Gastrocnemius medialis (tissue), 4 donors: ENCODE measurements at regions of chr18 and their contacts with region 1.

Region 1: DNA sequence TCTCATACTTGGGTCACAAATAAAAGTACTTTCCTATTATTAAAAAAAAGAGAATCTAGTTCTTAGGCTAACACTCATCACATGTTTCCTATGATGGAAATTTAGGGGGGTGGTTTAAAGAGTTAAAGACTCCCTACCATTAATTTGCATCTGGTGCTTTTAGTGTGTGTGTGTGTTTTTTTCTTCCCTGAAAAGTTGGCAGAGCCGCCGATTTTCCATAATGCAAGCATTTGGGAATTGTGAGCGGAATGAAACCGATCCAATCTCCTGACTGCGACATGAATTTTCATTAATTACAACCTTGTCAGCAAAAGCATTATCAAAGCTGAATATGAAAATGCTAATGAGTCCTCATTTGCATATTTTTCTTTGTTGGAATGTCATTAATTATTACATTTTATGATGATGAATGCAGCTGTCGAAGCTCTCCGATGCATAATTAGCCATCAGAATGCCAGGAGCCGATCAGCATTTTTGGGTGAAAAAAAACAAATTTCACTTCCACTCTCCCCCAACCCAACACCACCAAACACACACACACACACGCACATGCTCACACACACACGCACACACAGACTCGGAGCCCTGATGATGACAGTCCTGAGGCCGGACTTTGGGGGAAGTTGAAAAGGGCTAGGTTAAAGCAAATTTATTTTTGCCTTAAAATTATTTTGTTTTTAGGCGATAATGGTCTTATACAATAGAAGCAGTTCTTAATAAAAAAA is 165.4 kb downstream of the TCF4 start:
- DNase-seq: peak; percentile 18 to 45
- ATAC-seq: peak; percentile 40 to 52
- H3K4me3 ChIP-seq: peak overlapping the region; percentile 50 to 52 (median 52)
- H3K27ac ChIP-seq: peak overlapping the region; percentile 73 to 92 (median 89)
- H3K4me1 ChIP-seq: peaks cover 23 to 25% of the 10 kb centered on the region in 2 donors
- H3K27me3 ChIP-seq: no peaks in the 10 kb centered on the region
- CTCF ChIP-seq: no peak
- POLR2A ChIP-seq: peak in 1 of 2 donors; percentile 35

Region 2: GRCh38 chr18:55322178-55322735 is 100.4 kb before region 1 on chr18:
- in situ Hi-C with region 1: loop called in 2 of 4 experiments (anchors 5 to 25 kb)
- intact Hi-C with region 1: loop called (anchors 1 kb)
- DNase-seq: peak; percentile 77 to 90
- ATAC-seq: peak; percentile 88 to 90
- H3K4me3 ChIP-seq: peak overlapping the region; percentile 57 to 82 (median 73)
- H3K27ac ChIP-seq: peak overlapping the region; percentile 93 to 95 (median 94)
- H3K4me1 ChIP-seq: peaks cover 53 to 54% of the 10 kb centered on the region in 2 donors
- H3K27me3 ChIP-seq: no peaks in the 10 kb centered on the region
- CTCF ChIP-seq: peak in 2 of 5 experiments; percentile 12 to 17
- POLR2A ChIP-seq: peak; percentile 68 to 84

Region 3: DNA sequence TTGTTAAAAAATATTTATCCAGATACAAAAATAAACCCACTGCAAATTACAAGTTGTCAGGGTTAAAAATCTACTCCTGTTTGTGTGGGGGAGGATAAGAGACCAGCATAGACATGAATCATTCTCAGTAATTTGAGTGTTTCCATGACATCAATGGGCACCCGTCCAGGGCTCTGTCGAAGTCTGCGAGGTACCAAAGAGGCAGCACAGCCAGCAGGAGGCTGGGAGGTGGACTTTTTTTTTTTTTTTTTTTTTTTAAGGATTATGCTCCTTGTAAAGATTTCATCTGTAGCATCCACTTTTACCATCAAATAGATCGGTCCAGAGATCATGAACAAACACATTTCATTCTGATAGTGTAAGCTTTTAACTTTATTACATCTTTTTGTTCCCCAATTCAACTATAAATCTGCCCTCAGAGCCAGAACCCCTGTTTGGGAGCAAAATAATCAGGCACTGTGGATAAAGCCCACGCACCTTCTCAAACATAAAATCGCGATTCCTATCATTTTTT is 16.7 kb before region 1 on chr18:
- in situ Hi-C with region 1: no loop called
- intact Hi-C with region 1: loop called (anchors 2 kb)
- DNase-seq: peak; percentile 81 to 92
- ATAC-seq: peak; percentile 88 to 93
- H3K4me3 ChIP-seq: peak overlapping the region; percentile 50 to 58 (median 54)
- H3K27ac ChIP-seq: peak overlapping the region; percentile 80 to 85 (median 81)
- H3K4me1 ChIP-seq: peaks cover 47 to 84% of the 10 kb centered on the region in 2 donors
- H3K27me3 ChIP-seq: no peaks in the 10 kb centered on the region
- CTCF ChIP-seq: peak in 2 of 5 experiments; percentile 23 to 30
- POLR2A ChIP-seq: no peak

Region 4: GRCh38 chr18:55477499-55477859 is 54.9 kb after region 1 on chr18:
- in situ Hi-C with region 1: no loop called
- intact Hi-C with region 1: loop called (anchors 2 kb)
- DNase-seq: peak in 1 of 2 donors; percentile 48
- ATAC-seq: peak; percentile 70 to 90
- H3K4me3 ChIP-seq: peak overlapping the region; percentile 53 to 72 (median 58)
- H3K27ac ChIP-seq: peak overlapping the region; percentile 75 to 82 (median 78)
- H3K4me1 ChIP-seq: peaks cover 7 to 37% of the 10 kb centered on the region in 2 donors
- H3K27me3 ChIP-seq: no peaks in the 10 kb centered on the region
- CTCF ChIP-seq: peak in 3 of 5 experiments; percentile 16 to 51 (median 43)
- POLR2A ChIP-seq: no peak

Region 5: GRCh38 chr18:55494899-55495298 is 72.3 kb after region 1 on chr18:
- in situ Hi-C with region 1: no loop called
- intact Hi-C with region 1: no loop called
- DNase-seq: no peak
- ATAC-seq: no peak
- H3K4me3 ChIP-seq: no peak overlapping the region
- H3K27ac ChIP-seq: no peak overlapping the region
- H3K4me1 ChIP-seq: peaks cover 33 to 40% of the 10 kb centered on the region in 2 donors
- H3K27me3 ChIP-seq: no peaks in the 10 kb centered on the region
- CTCF ChIP-seq: no peak
- POLR2A ChIP-seq: no peak

Region 6: DNA sequence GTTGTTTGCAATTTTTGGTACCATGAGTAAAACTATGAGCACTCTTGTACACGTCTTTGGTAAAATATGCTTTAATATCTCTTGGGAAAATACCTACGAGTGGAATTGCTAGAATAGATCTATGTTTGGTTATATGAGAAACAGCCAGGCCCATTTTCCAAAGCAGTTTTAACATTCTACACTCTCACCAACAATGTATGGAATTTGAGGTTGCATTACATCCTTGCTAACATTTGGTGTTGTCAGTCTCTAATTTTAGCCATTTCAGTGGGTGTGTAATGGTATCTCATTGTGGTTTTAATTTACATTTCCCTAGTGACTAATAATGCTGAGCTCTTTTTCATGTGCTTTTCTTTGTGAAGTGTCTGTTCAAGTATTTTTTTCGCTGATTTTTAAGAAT is 284.3 kb after region 1 on chr18:
- in situ Hi-C with region 1: no loop called
- intact Hi-C with region 1: no loop called
- DNase-seq: no peak
- ATAC-seq: no peak
- H3K4me3 ChIP-seq: no peak overlapping the region
- H3K27ac ChIP-seq: no peak overlapping the region
- H3K4me1 ChIP-seq: no peaks in the 10 kb centered on the region
- H3K27me3 ChIP-seq: no peaks in the 10 kb centered on the region
- CTCF ChIP-seq: no peak
- POLR2A ChIP-seq: no peak

Region 7: GRCh38 chr18:55861266-55861665 is 438.6 kb after region 1 on chr18:
- in situ Hi-C with region 1: loop called in 1 of 4 experiments (anchors 10 kb)
- intact Hi-C with region 1: loop called (anchors 5 kb)
- DNase-seq: no peak
- ATAC-seq: peak in 1 of 2 donors; percentile 33
- H3K4me3 ChIP-seq: no peak overlapping the region
- H3K27ac ChIP-seq: no peak overlapping the region
- H3K4me1 ChIP-seq: peaks cover 3 to 10% of the 10 kb centered on the region in 2 donors
- H3K27me3 ChIP-seq: peaks cover 40 to 53% (median 51%) of the 10 kb centered on the region in 3 donors
- CTCF ChIP-seq: peak in 3 of 5 experiments; percentile 20 to 32 (median 22)
- POLR2A ChIP-seq: no peak